ENCODE measurements at regions of chr12 and their contacts with region 1.

Region 1: DNA sequence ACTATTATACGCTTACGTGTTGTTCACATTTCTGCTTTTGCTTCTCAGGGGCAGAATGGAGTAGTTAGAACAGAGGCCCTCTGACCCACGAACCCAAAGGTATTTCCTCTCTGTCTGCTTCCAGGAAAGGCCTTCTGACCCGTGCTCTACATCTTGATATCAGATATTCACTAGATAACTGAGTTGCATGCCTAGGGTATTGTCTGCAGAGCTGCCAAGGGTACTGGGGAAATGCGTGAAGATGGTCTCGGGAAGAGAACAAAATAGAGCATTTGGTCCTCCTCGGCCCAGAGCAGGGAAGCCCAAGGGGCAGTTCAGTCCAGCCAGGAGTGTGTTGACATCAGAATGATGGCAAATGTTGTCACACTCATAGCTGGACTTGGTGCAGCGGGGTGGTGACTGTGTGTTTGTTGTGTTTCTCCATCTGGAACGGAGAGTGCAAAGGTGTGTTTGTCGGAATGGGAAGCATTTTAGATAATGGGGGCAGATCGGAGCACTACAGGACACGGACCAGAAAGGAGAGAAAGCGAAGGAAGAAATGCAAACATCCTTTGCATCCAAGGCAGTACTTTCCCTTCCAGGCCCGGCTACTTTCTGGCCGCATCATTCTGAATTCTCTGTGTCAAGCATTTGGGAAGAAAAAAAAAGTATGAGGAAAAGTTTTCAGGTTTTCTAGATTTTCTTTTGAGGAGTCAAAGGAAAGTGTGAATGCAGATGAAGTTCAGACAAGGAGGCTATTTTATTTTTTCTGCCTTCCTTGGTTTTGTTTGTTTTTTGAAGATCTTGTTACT is 8.1 kb downstream of the GLT1D1 start:
- DNase-seq: peak; percentile 80
- ATAC-seq: peak; percentile 91
- H3K4me3 ChIP-seq: peak overlapping the region in 2 of 3 experiments; percentile 16 to 44; a peak in 2 of 6 replicates
- H3K27ac ChIP-seq: peak overlapping the region; percentile 56
- H3K4me1 ChIP-seq: peaks cover 41% of the 10 kb centered on the region
- H3K27me3 ChIP-seq: no peaks in the 10 kb centered on the region; a peak in 1 of 5 replicates
- CTCF ChIP-seq: no peak
- EP300 ChIP-seq: peak; percentile 62 to 67; a peak in 3 of 4 replicates
- POLR2A ChIP-seq: no peak
- RAD21 ChIP-seq: no peak

Region 2: GRCh38 chr12:128783129-128783574 is 78.3 kb before region 1 on chr12:
- CTCF ChIA-PET with region 1: no interaction called
- POLR2A ChIA-PET with region 1: no interaction called
- in situ Hi-C with region 1: no loop called
- intact Hi-C with region 1: no loop called
- DNase-seq: no peak
- ATAC-seq: no peak
- H3K4me3 ChIP-seq: no peak overlapping the region
- H3K27ac ChIP-seq: no peak overlapping the region
- H3K4me1 ChIP-seq: peaks cover 11% of the 10 kb centered on the region
- H3K27me3 ChIP-seq: no peaks in the 10 kb centered on the region
- CTCF ChIP-seq: no peak
- EP300 ChIP-seq: no peak
- POLR2A ChIP-seq: no peak
- RAD21 ChIP-seq: no peak

Region 3: GRCh38 chr12:128810182-128811127 is 51.0 kb before region 1 on chr12:
- CTCF ChIA-PET with region 1: no interaction called
- POLR2A ChIA-PET with region 1: no interaction called
- in situ Hi-C with region 1: no loop called
- intact Hi-C with region 1: no loop called
- DNase-seq: no peak
- ATAC-seq: peak; percentile 41; the same call in 2 of the 3 replicates
- H3K4me3 ChIP-seq: no peak overlapping the region
- H3K27ac ChIP-seq: no peak overlapping the region
- H3K4me1 ChIP-seq: no peaks in the 10 kb centered on the region
- H3K27me3 ChIP-seq: no peaks in the 10 kb centered on the region
- CTCF ChIP-seq: no peak
- EP300 ChIP-seq: no peak
- POLR2A ChIP-seq: no peak
- RAD21 ChIP-seq: no peak

Region 4: GRCh38 chr12:128823916-128824839 is 37.2 kb before region 1 on chr12 and contains the start of gene SLC15A4:
- CTCF ChIA-PET with region 1: no interaction called
- POLR2A ChIA-PET with region 1: interaction called, 11 read pairs
- in situ Hi-C with region 1: no loop called
- intact Hi-C with region 1: no loop called
- DNase-seq: peak; percentile 86
- ATAC-seq: peak; percentile 97
- H3K4me3 ChIP-seq: peak within 1 kb of the TSS; percentile 68 to 96 (median 92)
- H3K27ac ChIP-seq: peak within 1 kb of the TSS; percentile 86
- H3K4me1 ChIP-seq: peaks cover 42% of the 10 kb centered on the region
- H3K27me3 ChIP-seq: no peaks in the 10 kb centered on the region
- CTCF ChIP-seq: peak; percentile 33; the same call in 1 of the 2 replicates
- EP300 ChIP-seq: peak in 1 of 2 experiments; percentile 18; a peak in 1 of 4 replicates
- POLR2A ChIP-seq: peak; percentile 93 to 95
- RAD21 ChIP-seq: no peak
- total RNA-seq, gene SLC15A4: 8.2 and 17.3 TPM in 2 replicates

Region 5: DNA sequence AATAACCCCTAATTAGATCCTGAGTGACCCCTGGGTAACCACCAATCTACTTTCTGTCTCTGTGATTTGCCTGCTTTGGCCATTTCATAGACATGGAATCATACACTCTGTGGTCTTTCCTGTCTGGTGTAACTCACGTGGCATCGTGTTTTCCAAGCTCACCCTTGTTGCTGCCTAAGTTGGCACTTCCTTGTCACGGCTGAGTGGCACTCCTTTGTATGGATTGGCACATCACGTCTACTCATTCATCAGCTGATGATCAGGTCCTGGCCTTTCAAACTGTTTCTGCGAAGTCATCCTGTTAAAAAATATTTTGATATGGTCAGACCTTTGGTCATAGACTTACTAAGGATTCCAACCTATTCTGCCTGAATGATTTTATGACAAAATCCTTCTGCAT is 79.6 kb after region 1 on chr12:
- CTCF ChIA-PET with region 1: no interaction called
- POLR2A ChIA-PET with region 1: no interaction called
- in situ Hi-C with region 1: no loop called
- intact Hi-C with region 1: no loop called
- DNase-seq: no peak
- ATAC-seq: no peak
- H3K4me3 ChIP-seq: no peak overlapping the region
- H3K27ac ChIP-seq: no peak overlapping the region
- H3K4me1 ChIP-seq: no peaks in the 10 kb centered on the region
- H3K27me3 ChIP-seq: peaks cover 0 to 6% of the 10 kb centered on the region in 2 experiments; a peak in 2 of 5 replicates
- CTCF ChIP-seq: no peak
- EP300 ChIP-seq: no peak
- POLR2A ChIP-seq: no peak
- RAD21 ChIP-seq: no peak

Measured in HepG2 (cell line).